CD4-positive, alpha-beta T cell (primary cell): ENCODE measurements at regions of chr9 and their contacts with region 1.

Region 1: GRCh38 chr9:74804018-74804385 is 83.7 kb downstream of the TRPM6 start:
- DNase-seq: no peak
- ATAC-seq: no peak
- H3K4me3 ChIP-seq: no peak overlapping the region
- H3K4me3 Mint-ChIP-seq: no peak overlapping the region
- H3K27ac ChIP-seq: no peak overlapping the region
- H3K27ac Mint-ChIP-seq: no peak overlapping the region
- H3K4me1 ChIP-seq: no peaks in the 10 kb centered on the region
- H3K4me1 Mint-ChIP-seq: no peaks in the 10 kb centered on the region
- H3K27me3 ChIP-seq: peaks cover 2 to 6% of the 10 kb centered on the region in 2 experiments
- H3K27me3 Mint-ChIP-seq: peaks cover 58% of the 10 kb centered on the region
- CTCF ChIP-seq: no peak

Region 2: GRCh38 chr9:74865177-74865576 is 61.2 kb after region 1 on chr9:
- CTCF ChIA-PET with region 1: no interaction called
- POLR2A ChIA-PET with region 1: no interaction called
- intact Hi-C with region 1: no loop called
- DNase-seq: no peak
- ATAC-seq: no peak
- H3K4me3 ChIP-seq: no peak overlapping the region
- H3K4me3 Mint-ChIP-seq: no peak overlapping the region
- H3K27ac ChIP-seq: no peak overlapping the region
- H3K27ac Mint-ChIP-seq: no peak overlapping the region
- H3K4me1 ChIP-seq: no peaks in the 10 kb centered on the region
- H3K4me1 Mint-ChIP-seq: no peaks in the 10 kb centered on the region
- H3K27me3 ChIP-seq: no peaks in the 10 kb centered on the region
- H3K27me3 Mint-ChIP-seq: no peaks in the 10 kb centered on the region
- CTCF ChIP-seq: no peak

Region 3: GRCh38 chr9:74910036-74910435 is 106.0 kb after region 1 on chr9:
- CTCF ChIA-PET with region 1: no interaction called
- POLR2A ChIA-PET with region 1: no interaction called
- intact Hi-C with region 1: loop called in 1 of 2 experiments (anchors 10 kb)
- DNase-seq: no peak
- ATAC-seq: no peak
- H3K4me3 ChIP-seq: no peak overlapping the region
- H3K4me3 Mint-ChIP-seq: no peak overlapping the region
- H3K27ac ChIP-seq: no peak overlapping the region
- H3K27ac Mint-ChIP-seq: no peak overlapping the region
- H3K4me1 ChIP-seq: no peaks in the 10 kb centered on the region
- H3K4me1 Mint-ChIP-seq: no peaks in the 10 kb centered on the region
- H3K27me3 ChIP-seq: peaks cover 4 to 12% of the 10 kb centered on the region in 2 experiments
- H3K27me3 Mint-ChIP-seq: peaks cover 49% of the 10 kb centered on the region
- CTCF ChIP-seq: no peak